ENCODE measurements at regions of chr5 and their contacts with region 1.

Region 1: GRCh38 chr5:173917788-173918786 is 29.9 kb downstream of the CPEB4 start:
- DNase-seq: peak; percentile 87
- ATAC-seq: peak; percentile 75
- H3K4me3 ChIP-seq: peak overlapping the region; percentile 74
- H3K27ac ChIP-seq: peak overlapping the region; percentile 91
- H3K4me1 ChIP-seq: peaks cover 34% of the 10 kb centered on the region
- H3K27me3 ChIP-seq: no peaks in the 10 kb centered on the region
- CTCF ChIP-seq: peak; percentile 32; the same call in 1 of the 2 replicates

Region 2: DNA sequence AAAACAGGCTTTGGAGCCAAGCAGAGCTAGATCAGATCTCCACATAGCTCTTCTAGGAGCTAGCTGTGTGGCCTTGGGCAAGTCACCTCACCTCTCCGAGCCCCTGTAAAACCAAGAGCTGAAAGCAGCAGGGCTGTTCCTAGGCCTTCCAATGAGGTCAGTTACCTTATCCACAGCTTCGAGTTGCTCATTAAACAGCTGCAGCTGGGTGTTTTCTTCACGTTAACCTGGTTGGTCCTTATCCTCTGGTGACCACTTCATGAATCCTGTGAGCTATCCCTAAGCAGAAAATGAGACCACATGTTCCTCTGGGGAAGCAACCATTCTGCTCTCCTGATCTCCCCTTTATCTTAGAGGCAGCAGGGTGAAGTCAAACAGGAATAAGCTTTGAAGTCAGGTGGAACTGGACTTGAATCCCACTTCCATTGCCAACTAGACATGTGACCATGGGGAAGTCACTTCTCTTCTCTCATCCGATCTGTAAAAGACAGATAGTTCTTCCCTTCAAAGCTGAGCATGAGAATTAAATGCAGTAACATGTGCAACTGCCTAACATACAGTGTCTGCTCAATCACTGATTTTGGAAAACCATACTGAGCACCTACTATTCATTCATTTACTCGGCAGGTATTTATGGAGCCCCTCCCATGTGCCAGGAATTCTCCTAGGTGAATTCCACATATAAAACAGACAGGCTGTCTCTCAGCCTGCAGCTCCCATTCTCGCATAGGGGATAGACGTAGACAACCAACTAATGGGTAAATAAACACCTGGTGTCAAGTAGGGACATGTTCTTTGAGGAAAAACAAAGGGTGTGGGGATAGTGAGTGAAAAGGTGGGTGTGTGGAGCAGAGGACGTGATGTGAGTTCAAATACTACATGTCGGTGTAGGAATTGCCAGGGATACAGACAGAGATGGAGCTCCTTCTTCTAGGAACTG is 190.0 kb before region 1 on chr5:
- CTCF ChIA-PET with region 1: no interaction called
- POLR2A ChIA-PET with region 1: no interaction called
- intact Hi-C with region 1: no loop called
- DNase-seq: no peak
- ATAC-seq: no peak
- H3K4me3 ChIP-seq: no peak overlapping the region
- H3K27ac ChIP-seq: no peak overlapping the region
- H3K4me1 ChIP-seq: no peaks in the 10 kb centered on the region
- H3K27me3 ChIP-seq: no peaks in the 10 kb centered on the region
- CTCF ChIP-seq: no peak

Region 3: DNA sequence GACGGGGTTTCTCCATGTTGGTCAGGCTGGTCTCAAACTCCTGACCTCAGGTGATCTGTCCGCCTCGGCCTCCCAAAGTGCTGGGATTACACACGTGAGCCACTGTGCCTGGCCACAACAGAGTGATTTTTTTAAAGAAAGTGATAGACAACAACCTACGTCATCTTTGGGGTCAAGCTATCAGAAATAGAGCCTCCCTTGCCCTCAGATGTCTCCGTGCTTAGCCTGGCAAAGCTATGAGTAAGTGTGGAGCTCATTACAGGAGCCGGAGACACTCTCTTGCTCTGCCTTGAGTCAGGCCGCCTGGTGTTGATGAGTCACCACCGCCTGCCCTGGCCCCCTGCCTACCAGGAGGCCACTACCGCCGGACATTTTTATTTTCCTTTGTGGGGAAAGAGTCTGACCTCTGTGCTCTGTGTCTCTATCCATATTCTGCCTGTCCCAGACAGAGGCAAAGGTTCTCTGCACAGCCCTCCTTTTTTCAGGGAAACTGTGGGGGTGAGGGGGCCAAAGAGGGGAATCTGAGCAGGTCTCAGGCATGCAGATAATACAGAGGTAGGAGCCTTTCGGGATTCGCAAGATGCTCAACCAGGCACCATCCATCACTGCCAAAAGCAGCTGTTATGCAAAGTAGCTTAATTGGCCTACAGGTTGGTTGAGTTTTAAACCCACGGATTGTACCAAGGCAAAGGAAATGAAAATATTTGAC is 153.6 kb before region 1 on chr5:
- CTCF ChIA-PET with region 1: no interaction called
- POLR2A ChIA-PET with region 1: no interaction called
- intact Hi-C with region 1: loop called (anchors 1 kb)
- DNase-seq: peak; percentile 95
- ATAC-seq: peak; percentile 93
- H3K4me3 ChIP-seq: no peak overlapping the region
- H3K27ac ChIP-seq: peak overlapping the region; percentile 79
- H3K4me1 ChIP-seq: peaks cover 22% of the 10 kb centered on the region
- H3K27me3 ChIP-seq: no peaks in the 10 kb centered on the region
- CTCF ChIP-seq: no peak

Region 4: DNA sequence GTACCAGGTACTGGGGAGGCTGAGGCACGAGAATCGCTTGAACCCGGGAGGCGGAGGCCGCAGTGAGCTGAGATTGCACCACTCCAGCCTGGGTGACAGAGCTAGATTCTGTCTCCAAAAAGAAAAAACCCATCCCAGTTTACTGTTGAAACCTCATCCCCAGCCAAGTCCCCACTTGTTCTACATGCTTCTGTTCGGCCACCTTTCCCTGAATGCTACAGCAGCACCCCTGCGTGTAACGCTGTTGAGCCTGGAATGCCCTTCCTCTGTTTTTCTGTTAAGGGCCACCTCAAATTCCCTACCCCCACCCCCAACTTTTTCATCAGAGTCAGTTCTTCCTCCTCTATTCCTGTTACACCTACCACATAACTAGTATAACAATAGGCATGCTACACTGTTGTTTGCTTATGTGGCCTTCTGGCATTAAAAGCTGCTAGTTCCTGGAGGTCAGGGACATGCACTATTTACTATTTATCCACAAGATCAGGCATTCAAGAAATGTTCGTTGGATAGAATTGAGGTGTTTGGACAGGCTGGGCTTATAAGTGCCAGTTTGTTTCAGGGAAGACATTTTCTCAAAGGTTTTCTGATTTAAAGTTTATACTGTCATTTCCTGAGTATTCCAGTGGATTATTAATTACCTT is 23.8 kb after region 1 on chr5:
- CTCF ChIA-PET with region 1: no interaction called
- POLR2A ChIA-PET with region 1: no interaction called
- intact Hi-C with region 1: loop called (anchors 1 kb)
- DNase-seq: peak; percentile 64
- ATAC-seq: peak; percentile 82
- H3K4me3 ChIP-seq: peak overlapping the region; percentile 28; the same call in 1 of the 2 replicates
- H3K27ac ChIP-seq: peak overlapping the region; percentile 56
- H3K4me1 ChIP-seq: peaks cover 43% of the 10 kb centered on the region
- H3K27me3 ChIP-seq: no peaks in the 10 kb centered on the region
- CTCF ChIP-seq: no peak

Region 5: DNA sequence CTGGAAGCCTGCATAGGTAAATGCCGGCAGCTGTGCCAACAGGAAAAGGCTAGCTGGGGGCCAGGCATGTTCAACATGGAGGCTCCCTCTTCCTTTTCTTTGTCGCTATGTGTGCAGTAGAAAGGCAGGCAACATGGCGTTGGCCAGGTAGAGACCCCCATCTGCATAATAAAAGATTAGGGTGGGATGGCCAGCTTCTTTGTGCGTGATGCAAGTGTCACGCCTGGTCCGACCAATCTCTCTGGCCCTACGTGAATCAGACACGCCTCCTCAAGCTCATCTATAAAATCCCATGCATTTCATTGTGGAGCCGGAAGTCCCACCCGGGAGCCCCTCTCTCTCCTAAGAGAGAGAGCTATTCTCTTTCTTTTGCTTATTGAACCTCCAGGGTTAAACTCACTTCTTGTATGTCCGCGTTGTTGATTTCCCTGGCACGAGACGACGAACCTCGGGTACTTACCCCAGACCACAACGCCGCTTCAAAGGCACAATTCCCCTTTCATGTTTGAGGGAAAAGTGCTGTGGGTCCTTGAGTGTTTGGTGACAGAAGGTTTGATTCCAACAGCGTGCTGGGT is 45.9 kb after region 1 on chr5:
- CTCF ChIA-PET with region 1: no interaction called
- POLR2A ChIA-PET with region 1: interaction called, 6 read pairs
- intact Hi-C with region 1: loop called (anchors 1 kb)
- DNase-seq: peak; percentile 44
- ATAC-seq: peak; percentile 45
- H3K4me3 ChIP-seq: peak overlapping the region; percentile 66
- H3K27ac ChIP-seq: peak overlapping the region; percentile 89
- H3K4me1 ChIP-seq: peaks cover 24% of the 10 kb centered on the region
- H3K27me3 ChIP-seq: no peaks in the 10 kb centered on the region
- CTCF ChIP-seq: no peak